Activated CD4-positive, alpha-beta T cell treated with anti-CD3 and anti-CD28 coated beads for 36 hours (primary cell): ENCODE measurements at regions of chr17 and their contacts with region 1.

Region 1: DNA sequence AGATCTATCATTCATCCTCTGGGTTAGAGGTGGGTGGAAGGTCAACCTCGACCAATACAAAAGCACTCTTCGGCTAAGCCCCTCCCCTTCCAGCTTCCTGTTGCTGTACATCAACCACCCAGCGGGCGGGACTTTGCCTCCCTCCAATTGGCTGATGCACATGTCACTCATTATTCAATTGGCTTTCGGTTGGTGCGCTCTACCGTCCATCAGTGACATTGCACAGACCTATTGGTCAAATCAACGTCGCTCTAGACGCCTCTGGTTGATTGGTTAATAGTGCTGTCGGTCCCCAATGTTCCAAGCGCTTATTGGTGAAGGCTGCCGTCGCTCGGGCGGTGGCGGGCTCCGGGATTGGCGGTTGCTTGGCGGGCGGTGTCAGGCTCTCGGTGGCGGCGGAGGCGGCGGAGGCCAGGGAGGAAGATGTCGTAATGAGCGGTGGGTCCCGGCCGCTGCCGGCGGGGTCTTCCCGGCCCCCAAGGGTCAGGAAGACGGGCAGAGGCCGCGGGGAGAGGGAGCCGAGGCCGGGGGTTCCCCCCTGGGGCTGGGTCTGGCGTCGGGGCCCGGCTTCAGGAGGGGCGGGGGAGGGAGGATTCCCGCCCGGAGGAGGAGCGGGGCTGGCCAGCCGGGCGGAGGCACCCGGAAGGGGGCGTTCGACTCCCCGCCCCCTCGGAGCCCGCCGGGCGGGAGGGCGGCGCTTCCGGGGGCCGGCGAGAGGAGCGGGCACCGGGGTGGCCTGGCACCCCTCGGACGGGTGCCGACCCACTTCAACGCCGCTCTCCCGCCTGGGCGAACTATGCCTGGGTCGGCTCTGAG is at the start of gene SP2:
- DNase-seq: peak; percentile 99
- ATAC-seq: peak; percentile 94
- H3K4me3 Mint-ChIP-seq: peak within 1 kb of the TSS; percentile 96
- H3K27ac Mint-ChIP-seq: peak within 1 kb of the TSS; percentile 96
- H3K4me1 Mint-ChIP-seq: peaks cover 46% of the 10 kb centered on the region
- H3K27me3 Mint-ChIP-seq: no peaks in the 10 kb centered on the region
- total RNA-seq, gene SP2: 15.7 to 19.8 TPM

Region 2: DNA sequence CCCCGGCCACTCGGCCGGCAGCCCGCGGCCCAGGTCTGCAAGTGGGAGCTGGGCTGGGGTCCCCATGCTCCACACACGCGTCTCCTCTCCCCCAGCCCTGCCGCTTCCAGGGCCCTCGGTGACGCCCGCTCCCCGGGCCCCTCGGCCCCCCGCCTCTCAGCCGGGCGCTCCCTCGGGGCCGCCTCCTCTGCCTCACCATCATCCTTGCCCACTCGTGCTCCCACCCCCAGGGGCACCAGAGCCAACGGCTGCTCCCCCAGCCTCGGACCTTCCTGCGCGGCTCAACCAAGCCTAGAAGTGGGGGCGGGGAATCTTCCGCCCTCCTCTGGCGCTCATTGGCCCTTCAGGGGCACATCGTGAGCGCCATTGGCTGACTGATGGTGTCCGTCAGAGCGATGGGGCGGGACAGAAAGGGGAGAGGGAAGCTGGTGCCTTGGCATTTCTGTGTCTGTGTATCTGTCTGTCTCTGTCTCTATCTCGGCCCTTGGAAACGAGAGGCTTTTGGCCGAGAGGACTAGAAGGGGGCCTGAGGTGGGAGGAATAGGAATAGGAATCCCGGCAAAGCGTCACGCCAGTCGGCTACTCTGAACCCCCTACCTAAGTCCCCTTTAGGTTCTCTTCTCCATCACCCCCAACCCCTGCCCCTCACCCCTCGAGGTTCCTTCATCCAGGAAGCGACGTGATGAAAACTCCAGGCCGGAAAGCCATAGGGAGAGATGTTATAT is 795.9 kb before region 1 on chr17:
- CTCF ChIA-PET with region 1: no interaction called
- POLR2A ChIA-PET with region 1: no interaction called
- intact Hi-C with region 1: loop called in 1 of 2 experiments (anchors 5 kb)
- DNase-seq: peak; percentile 95
- ATAC-seq: peak; percentile 100
- H3K4me3 Mint-ChIP-seq: peak overlapping the region; percentile 87
- H3K27ac Mint-ChIP-seq: peak overlapping the region; percentile 97
- H3K4me1 Mint-ChIP-seq: peaks cover 19% of the 10 kb centered on the region
- H3K27me3 Mint-ChIP-seq: no peaks in the 10 kb centered on the region

Region 3: DNA sequence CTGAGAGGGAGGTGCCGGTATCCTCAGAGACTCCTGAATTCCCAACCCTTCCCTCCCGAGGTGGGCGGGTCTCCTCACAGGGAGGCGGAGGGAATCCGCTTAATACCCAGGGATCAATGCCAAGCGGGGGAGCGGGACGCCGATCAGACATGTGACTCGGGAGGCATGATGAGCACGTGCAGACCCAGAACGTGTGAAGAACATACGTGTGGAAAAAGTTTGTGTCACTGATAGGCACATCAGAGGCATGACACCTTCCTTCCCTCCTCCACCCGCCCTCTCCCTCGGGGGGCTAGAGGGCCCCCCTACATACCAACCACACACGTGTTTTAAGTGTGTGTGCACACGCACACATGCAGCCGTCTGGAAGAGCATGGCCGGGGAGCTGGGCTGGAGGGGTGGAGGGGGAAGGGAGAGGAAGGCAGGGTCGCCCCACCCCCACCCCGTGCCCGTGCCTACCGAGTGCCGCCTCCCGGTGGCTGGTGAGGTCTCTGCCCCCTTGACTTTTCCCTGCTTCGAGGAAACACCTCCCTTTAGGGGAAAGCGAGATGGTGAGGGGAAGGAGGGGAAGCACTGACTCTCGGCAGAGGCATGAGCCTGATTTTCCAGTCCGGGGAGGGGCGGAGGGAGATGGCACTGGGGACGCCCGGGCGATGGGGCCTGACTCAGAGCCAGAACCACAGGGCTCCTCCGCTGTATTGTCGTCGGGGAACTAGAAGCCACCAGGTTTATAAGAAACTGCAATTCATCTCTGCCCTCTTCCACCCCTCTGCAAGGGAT is 175.1 kb before region 1 on chr17:
- CTCF ChIA-PET with region 1: no interaction called
- POLR2A ChIA-PET with region 1: no interaction called
- intact Hi-C with region 1: loop called in 1 of 2 experiments (anchors 1 kb)
- DNase-seq: peak; percentile 99
- ATAC-seq: peak; percentile 71
- H3K4me3 Mint-ChIP-seq: peak overlapping the region; percentile 69
- H3K27ac Mint-ChIP-seq: peak overlapping the region; percentile 98
- H3K4me1 Mint-ChIP-seq: peaks cover 97% of the 10 kb centered on the region
- H3K27me3 Mint-ChIP-seq: no peaks in the 10 kb centered on the region

Region 4: DNA sequence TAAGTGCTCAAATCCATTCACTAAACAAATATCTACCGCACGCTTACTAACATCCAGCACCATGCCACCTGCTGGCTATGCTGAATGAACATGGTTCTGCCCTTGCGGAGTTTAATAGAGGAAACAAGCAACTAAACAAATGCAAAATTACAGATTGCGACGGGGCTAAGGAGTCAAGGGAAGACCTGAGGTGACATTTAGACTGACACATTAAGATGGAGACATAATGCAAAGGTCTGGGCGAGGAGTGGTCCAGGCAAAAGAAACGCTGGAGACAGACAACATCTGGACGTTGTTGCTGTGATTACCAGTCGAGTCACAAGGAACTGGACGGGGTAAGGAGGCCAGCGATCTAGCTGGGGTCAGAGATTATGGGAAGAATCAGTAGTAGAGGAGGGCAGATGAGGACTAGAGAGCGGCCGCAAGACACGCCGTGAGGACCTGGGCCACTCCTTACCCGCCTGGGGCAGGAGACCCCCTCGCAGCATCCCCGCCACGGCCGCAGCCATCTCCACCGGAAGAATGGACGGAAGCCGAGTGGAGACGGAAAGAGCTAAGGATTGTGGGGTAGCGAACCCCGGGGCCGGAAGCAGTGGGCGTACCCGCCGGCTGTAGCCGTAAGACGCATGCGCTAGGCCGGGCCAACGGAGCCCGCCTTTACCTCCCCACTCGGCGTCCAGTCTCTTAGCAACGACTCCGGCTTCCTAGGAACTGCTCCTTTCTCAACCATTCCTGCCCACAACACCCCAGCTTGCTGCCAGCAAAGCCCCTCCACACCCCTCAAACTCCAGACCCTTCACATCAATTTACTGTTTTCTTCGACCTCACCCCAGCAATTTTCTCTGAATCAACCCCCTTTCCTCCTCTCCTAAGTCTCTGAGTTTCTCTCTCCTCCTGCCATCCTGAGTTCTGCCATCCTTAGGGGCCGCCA is 64.8 kb before region 1 on chr17 and contains the starts of genes LRRC46 and MRPL10:
- CTCF ChIA-PET with region 1: interaction called, 4 read pairs
- POLR2A ChIA-PET with region 1: interaction called, 5 read pairs
- intact Hi-C with region 1: loop called in 1 of 2 experiments (anchors 1 kb)
- DNase-seq: peak; percentile 96
- ATAC-seq: peak; percentile 94
- H3K4me3 Mint-ChIP-seq: peak within 1 kb of the TSS; percentile 88
- H3K27ac Mint-ChIP-seq: peak within 1 kb of the TSS; percentile 88
- H3K4me1 Mint-ChIP-seq: peaks cover 57% of the 10 kb centered on the region
- H3K27me3 Mint-ChIP-seq: no peaks in the 10 kb centered on the region
- total RNA-seq, gene LRRC46: 0.46 to 0.82 TPM
- total RNA-seq, gene MRPL10: 66.9 to 70.9 TPM

Region 5: GRCh38 chr17:47970704-47971463 is 74.8 kb after region 1 on chr17 and contains the start of gene CDK5RAP3:
- CTCF ChIA-PET with region 1: interaction called, 16 read pairs
- POLR2A ChIA-PET with region 1: interaction called, 22 read pairs
- intact Hi-C with region 1: loop called (anchors 1 kb)
- DNase-seq: peak; percentile 100
- ATAC-seq: peak; percentile 100
- H3K4me3 Mint-ChIP-seq: peak within 1 kb of the TSS; percentile 97
- H3K27ac Mint-ChIP-seq: peak within 1 kb of the TSS; percentile 94
- H3K4me1 Mint-ChIP-seq: peaks cover 21% of the 10 kb centered on the region
- H3K27me3 Mint-ChIP-seq: no peaks in the 10 kb centered on the region
- total RNA-seq, gene CDK5RAP3: 147 to 156 TPM

Region 6: DNA sequence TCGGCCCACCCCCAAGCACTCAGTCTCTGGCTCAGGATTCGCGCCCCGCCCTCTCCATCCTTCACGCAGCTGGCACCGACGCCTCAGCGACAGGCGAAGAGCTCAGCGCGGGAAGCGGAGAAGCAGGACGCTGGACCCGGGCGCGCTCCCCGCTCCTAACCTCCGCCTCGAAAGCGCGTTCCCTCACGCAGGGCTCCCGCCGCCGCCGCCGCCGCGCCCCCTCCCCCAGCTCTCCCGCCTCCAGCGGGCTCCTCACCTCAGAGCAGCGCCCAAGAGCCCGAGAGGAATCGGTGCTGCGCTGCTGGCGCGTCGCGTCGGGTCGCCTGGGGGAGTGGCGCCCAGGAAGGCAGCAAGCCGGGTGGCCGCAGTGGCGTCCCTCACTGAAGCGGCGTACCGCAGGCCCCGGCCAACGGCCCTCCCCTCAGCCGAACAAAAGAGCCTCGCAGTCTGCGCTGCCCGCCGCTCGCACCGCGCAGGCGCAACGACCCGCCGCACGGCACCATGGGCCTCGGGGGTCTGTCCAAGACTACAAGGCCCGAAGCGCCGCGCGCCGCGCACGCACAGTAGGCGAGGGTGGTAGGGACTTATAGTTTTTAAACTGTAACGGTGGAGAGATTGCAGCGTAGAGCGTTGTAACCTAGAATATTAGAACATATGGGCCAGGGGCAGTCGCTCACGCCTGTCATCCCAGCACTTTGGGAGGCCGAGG is 205.1 kb after region 1 on chr17 and contains the start of gene CBX1:
- CTCF ChIA-PET with region 1: no interaction called
- POLR2A ChIA-PET with region 1: no interaction called
- intact Hi-C with region 1: loop called in 1 of 2 experiments (anchors 1 kb)
- DNase-seq: peak; percentile 97
- ATAC-seq: peak; percentile 95
- H3K4me3 Mint-ChIP-seq: peak within 1 kb of the TSS; percentile 99
- H3K27ac Mint-ChIP-seq: peak within 1 kb of the TSS; percentile 83
- H3K4me1 Mint-ChIP-seq: peaks cover 41% of the 10 kb centered on the region
- H3K27me3 Mint-ChIP-seq: no peaks in the 10 kb centered on the region
- total RNA-seq, gene CBX1: 58.6 to 66.0 TPM